ENCODE measurements at regions of chr12 and their contacts with region 1.

Region 1: GRCh38 chr12:74415633-74416032 is 122.0 kb upstream of the ATXN7L3B start:
- DNase-seq: no peak

Region 2: GRCh38 chr12:74021937-74022336 is 393.7 kb before region 1 on chr12:
- intact Hi-C with region 1: loop called (anchors 10 kb)
- DNase-seq: no peak

Region 3: GRCh38 chr12:74393272-74393671 is 22.4 kb before region 1 on chr12:
- intact Hi-C with region 1: no loop called
- DNase-seq: no peak

Measured in cardiac septum (tissue), 1 donor.